ENCODE measurements at regions of chr15 and their contacts with region 1.

Region 1: GRCh38 chr15:98160236-98160635 is 199.7 kb downstream of the ARRDC4 start:
- DNase-seq: peak; percentile 72

Region 2: GRCh38 chr15:97301166-97301565 is 859.1 kb before region 1 on chr15:
- intact Hi-C with region 1: loop called in 1 of 2 experiments (anchors 5 kb)
- DNase-seq: peak; percentile 50

Region 3: GRCh38 chr15:97490429-97490828 is 669.8 kb before region 1 on chr15:
- intact Hi-C with region 1: no loop called
- DNase-seq: no peak

Region 4: GRCh38 chr15:98123834-98124474 is 36.3 kb before region 1 on chr15:
- intact Hi-C with region 1: no loop called
- DNase-seq: no peak

Region 5: GRCh38 chr15:100101426-100102089 is 1941.3 kb after region 1 on chr15:
- intact Hi-C with region 1: no loop called
- DNase-seq: peak; percentile 82

Measured in posterior vena cava (tissue), 2 donors.